Pancreas (tissue), 10 donors: ENCODE measurements at regions of chr1 and their contacts with region 1.

Region 1: GRCh38 chr1:204711947-204712701 is 26.6 kb upstream of the LRRN2 start:
- DNase-seq: no peak
- ATAC-seq: peak in 2 of 4 donors; percentile 40 to 43
- H3K4me3 ChIP-seq: no peak overlapping the region
- H3K27ac ChIP-seq: no peak overlapping the region
- H3K4me1 ChIP-seq: no peaks in the 10 kb centered on the region
- H3K27me3 ChIP-seq: peaks cover 0 to 5% (median 0%) of the 10 kb centered on the region in 4 donors
- CTCF ChIP-seq: no peak

Region 2: DNA sequence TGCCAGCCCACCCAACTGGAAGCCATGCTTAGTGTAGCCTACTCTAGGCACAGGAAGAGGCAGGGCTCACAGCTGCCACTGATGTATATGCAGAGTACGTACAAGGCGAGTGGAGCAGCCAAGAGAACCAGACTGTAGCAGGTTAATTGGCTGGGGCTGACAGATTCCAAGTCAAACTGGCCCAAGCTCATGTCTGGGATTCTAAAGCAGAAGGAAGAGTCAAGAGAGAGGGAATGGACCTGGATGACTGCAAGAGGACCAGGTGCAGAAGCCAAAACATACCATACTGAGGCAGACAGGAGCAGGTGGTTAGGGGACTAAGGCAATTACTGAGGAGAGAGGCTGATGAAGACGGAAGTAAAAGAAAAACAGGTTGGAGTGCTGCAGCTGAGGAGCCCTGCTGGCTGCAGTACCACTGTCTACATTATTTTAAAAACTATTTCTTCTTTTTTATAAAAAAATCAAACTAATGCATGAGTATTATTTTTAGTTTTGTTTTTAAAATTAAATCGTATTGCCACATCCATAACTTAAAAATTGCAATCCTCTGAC is 24.8 kb after region 1 on chr1:
- intact Hi-C with region 1: loop called in 1 of 3 experiments (anchors 2 kb)
- DNase-seq: no peak
- ATAC-seq: no peak
- H3K4me3 ChIP-seq: no peak overlapping the region
- H3K27ac ChIP-seq: no peak overlapping the region
- H3K4me1 ChIP-seq: no peaks in the 10 kb centered on the region
- H3K27me3 ChIP-seq: no peaks in the 10 kb centered on the region
- CTCF ChIP-seq: no peak

Region 3: DNA sequence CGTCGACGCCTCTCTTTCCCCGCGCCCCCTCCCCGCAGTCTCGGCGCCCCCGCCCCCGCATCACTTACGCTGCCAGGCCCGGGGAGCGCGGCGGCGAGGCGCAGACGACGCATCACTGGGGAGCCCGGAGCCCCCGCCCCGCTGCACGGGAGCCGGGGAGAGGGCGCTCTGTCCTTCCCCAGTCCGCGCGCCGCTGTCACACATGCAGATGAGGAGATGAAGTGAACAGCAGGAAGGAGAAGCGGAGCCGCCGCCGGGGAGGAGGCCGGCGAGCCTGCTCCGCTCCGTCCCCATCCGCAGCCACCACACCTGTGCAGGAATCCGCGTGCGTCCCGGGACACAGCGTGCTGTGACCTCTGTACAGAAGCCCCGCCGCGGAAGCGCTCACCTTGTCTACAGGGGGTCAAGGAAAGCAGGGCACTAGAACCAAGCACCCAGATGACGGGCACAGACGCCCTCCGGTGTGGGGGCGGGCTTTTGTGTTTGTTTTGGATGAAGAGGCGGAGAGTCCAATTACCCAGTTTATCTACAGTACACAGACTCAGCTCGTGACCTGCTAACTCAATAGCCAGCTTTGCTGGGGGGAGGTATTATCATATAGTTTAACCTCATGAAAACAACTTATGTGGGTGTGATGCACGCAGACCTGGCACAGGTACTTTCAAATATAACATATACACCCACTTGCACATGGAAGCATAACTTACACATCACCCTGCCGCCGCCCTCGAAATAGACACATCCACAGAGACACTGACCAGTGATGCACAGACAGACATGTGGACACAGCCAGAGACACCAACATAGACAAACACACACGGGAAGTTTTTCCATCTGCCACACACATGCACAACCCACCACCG is 632.2 kb after region 1 on chr1:
- intact Hi-C with region 1: no loop called
- DNase-seq: peak in 5 of 6 donors; percentile 32 to 78 (median 45)
- ATAC-seq: peak; percentile 68 to 84 (median 79)
- H3K4me3 ChIP-seq: peak overlapping the region in 3 of 4 donors; percentile 18 to 46 (median 23)
- H3K27ac ChIP-seq: no peak overlapping the region
- H3K4me1 ChIP-seq: peaks cover 0 to 10% (median 9%) of the 10 kb centered on the region in 3 donors
- H3K27me3 ChIP-seq: no peaks in the 10 kb centered on the region
- CTCF ChIP-seq: no peak